HEK293 (cell line): ENCODE measurements at regions of chr11 and their contacts with region 1.

Region 1: GRCh38 chr11:65111744-65112414 is at the start of gene TM7SF2:
- H3K4me3 ChIP-seq: peak within 1 kb of the TSS; percentile 67
- H3K27ac ChIP-seq: peak within 1 kb of the TSS; percentile 72
- H3K4me1 ChIP-seq: peaks cover 6% of the 10 kb centered on the region
- CTCF ChIP-seq: no peak

Region 2: GRCh38 chr11:64914123-64914522 is 197.8 kb before region 1 on chr11:
- CTCF ChIA-PET with region 1: no interaction called
- POLR2A ChIA-PET with region 1: no interaction called
- H3K4me3 ChIP-seq: no peak overlapping the region
- H3K27ac ChIP-seq: no peak overlapping the region
- H3K4me1 ChIP-seq: no peaks in the 10 kb centered on the region
- CTCF ChIP-seq: no peak

Region 3: GRCh38 chr11:65095974-65096806 is 15.7 kb before region 1 on chr11 and contains the start of gene VPS51:
- CTCF ChIA-PET with region 1: interaction called, 110 read pairs
- POLR2A ChIA-PET with region 1: interaction called, 24 read pairs
- H3K4me3 ChIP-seq: peak within 1 kb of the TSS; percentile 61
- H3K27ac ChIP-seq: peak within 1 kb of the TSS; percentile 60; the same call in 1 of the 2 replicates
- H3K4me1 ChIP-seq: peaks cover 3% of the 10 kb centered on the region; the same call in 1 of the 2 replicates
- CTCF ChIP-seq: no peak